ENCODE measurements at regions of chr1 and their contacts with region 1.

Region 1: GRCh38 chr1:224454397-224455066 is 19.9 kb upstream of the WDR26 start:
- DNase-seq: peak; percentile 95
- H3K4me3 Mint-ChIP-seq: peak overlapping the region; percentile 46
- H3K27ac Mint-ChIP-seq: peak overlapping the region; percentile 68
- H3K4me1 Mint-ChIP-seq: peaks cover 51% of the 10 kb centered on the region
- H3K27me3 Mint-ChIP-seq: no peaks in the 10 kb centered on the region
- CTCF ChIP-seq: no peak

Region 2: GRCh38 chr1:224312025-224312424 is 142.5 kb before region 1 on chr1:
- CTCF ChIA-PET with region 1: no interaction called
- POLR2A ChIA-PET with region 1: no interaction called
- intact Hi-C with region 1: no loop called
- DNase-seq: no peak
- H3K4me3 Mint-ChIP-seq: no peak overlapping the region
- H3K27ac Mint-ChIP-seq: no peak overlapping the region
- H3K4me1 Mint-ChIP-seq: no peaks in the 10 kb centered on the region
- H3K27me3 Mint-ChIP-seq: no peaks in the 10 kb centered on the region
- CTCF ChIP-seq: no peak

Region 3: GRCh38 chr1:224356685-224357625 is 97.6 kb before region 1 on chr1 and contains the start of gene CNIH4:
- CTCF ChIA-PET with region 1: interaction called, 12 read pairs
- POLR2A ChIA-PET with region 1: interaction called, 19 read pairs
- intact Hi-C with region 1: loop called (anchors 1 kb)
- DNase-seq: peak; percentile 99
- H3K4me3 Mint-ChIP-seq: peak within 1 kb of the TSS; percentile 89
- H3K27ac Mint-ChIP-seq: peak within 1 kb of the TSS; percentile 74
- H3K4me1 Mint-ChIP-seq: peaks cover 17% of the 10 kb centered on the region
- H3K27me3 Mint-ChIP-seq: no peaks in the 10 kb centered on the region
- CTCF ChIP-seq: peak; percentile 11
- total RNA-seq, gene CNIH4: 190 and 212 TPM in 2 replicates

Region 4: DNA sequence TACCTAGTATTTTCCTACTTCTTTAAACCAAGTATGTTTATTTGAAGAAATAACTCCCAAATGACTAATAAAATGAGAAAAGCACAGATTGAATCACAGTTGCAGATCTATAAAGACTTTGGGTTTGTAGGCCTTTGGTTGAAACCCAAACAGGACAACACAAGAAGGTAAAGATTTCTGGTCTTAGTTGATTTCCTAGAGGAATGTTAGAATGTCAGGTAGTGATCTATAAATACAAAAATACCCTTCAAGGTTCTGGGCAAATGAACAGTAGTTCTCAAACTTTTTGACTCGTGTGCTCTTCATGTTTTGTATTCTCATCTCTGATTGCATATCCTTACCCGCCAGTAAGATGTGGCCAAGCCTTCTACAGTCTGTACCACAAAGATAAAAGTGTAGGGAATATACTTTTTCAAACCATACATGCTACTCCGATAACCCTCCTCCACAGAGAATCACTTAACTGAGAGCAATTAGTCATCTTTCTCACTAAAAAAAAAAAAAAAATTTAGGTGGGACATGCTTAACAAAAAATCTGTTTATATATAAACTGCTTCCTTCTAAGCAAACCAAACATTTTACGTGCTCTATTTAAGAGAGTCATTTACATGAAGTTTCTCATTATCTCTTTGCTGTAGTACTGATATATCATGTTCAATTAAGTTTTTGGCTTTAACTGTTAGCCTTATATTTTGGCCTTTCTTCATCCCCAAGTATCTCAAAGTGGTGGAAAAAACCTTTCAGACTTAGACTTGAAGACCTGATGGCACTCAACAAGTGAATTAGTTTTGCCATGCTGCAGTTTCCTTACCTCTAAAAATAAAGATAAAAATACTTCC is 61.9 kb before region 1 on chr1:
- CTCF ChIA-PET with region 1: interaction called, 27 read pairs
- POLR2A ChIA-PET with region 1: interaction called, 4 read pairs
- intact Hi-C with region 1: loop called (anchors 5 kb)
- DNase-seq: no peak
- H3K4me3 Mint-ChIP-seq: no peak overlapping the region
- H3K27ac Mint-ChIP-seq: no peak overlapping the region
- H3K4me1 Mint-ChIP-seq: no peaks in the 10 kb centered on the region
- H3K27me3 Mint-ChIP-seq: no peaks in the 10 kb centered on the region
- CTCF ChIP-seq: no peak

Region 5: DNA sequence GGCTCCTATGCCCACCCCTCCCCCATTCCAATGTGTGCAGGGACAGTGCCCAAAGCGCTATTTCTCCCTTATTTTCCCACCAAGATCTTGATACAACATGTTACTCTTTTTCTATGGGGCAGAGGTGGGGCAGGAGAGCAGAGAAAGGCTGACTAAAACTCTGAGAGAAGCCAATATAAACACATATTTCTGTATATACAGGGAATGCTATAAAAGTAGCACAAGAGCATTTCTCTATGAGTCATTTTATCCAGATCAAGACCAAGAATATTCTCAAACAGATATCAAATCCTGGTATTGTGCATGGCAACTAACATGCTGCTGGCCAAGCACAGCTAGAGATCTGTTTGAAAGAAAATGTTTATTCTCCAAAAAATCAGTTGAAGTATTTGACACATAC is 27.2 kb before region 1 on chr1:
- CTCF ChIA-PET with region 1: interaction called, 418 read pairs
- POLR2A ChIA-PET with region 1: interaction called, 800 read pairs
- intact Hi-C with region 1: loop called (anchors 1 kb)
- DNase-seq: peak; percentile 89
- H3K4me3 Mint-ChIP-seq: peak overlapping the region; percentile 43
- H3K27ac Mint-ChIP-seq: peak overlapping the region; percentile 53
- H3K4me1 Mint-ChIP-seq: peaks cover 38% of the 10 kb centered on the region
- H3K27me3 Mint-ChIP-seq: no peaks in the 10 kb centered on the region
- CTCF ChIP-seq: no peak

Region 6: GRCh38 chr1:224472806-224473205 is 18.3 kb after region 1 on chr1:
- CTCF ChIA-PET with region 1: interaction called, 38 read pairs
- POLR2A ChIA-PET with region 1: interaction called, 3 read pairs
- intact Hi-C with region 1: no loop called
- DNase-seq: no peak
- H3K4me3 Mint-ChIP-seq: no peak overlapping the region
- H3K27ac Mint-ChIP-seq: no peak overlapping the region
- H3K4me1 Mint-ChIP-seq: no peaks in the 10 kb centered on the region
- H3K27me3 Mint-ChIP-seq: no peaks in the 10 kb centered on the region
- CTCF ChIP-seq: no peak

Region 7: GRCh38 chr1:224497714-224498573 is 43.4 kb after region 1 on chr1:
- CTCF ChIA-PET with region 1: interaction called, 99 read pairs
- POLR2A ChIA-PET with region 1: interaction called, 30 read pairs
- intact Hi-C with region 1: no loop called
- DNase-seq: peak; percentile 97
- H3K4me3 Mint-ChIP-seq: peak overlapping the region; percentile 50
- H3K27ac Mint-ChIP-seq: peak overlapping the region; percentile 86
- H3K4me1 Mint-ChIP-seq: peaks cover 69% of the 10 kb centered on the region
- H3K27me3 Mint-ChIP-seq: no peaks in the 10 kb centered on the region
- CTCF ChIP-seq: peak; percentile 6